Activated CD8-positive, alpha-beta T cell treated with anti-CD3 and anti-CD28 coated beads, Interleukin-2, amount 10 ng/mL, durations not matched to agents 7 days and 5 days (primary cell): ENCODE measurements at regions of chr1 and their contacts with region 1.

Region 1: DNA sequence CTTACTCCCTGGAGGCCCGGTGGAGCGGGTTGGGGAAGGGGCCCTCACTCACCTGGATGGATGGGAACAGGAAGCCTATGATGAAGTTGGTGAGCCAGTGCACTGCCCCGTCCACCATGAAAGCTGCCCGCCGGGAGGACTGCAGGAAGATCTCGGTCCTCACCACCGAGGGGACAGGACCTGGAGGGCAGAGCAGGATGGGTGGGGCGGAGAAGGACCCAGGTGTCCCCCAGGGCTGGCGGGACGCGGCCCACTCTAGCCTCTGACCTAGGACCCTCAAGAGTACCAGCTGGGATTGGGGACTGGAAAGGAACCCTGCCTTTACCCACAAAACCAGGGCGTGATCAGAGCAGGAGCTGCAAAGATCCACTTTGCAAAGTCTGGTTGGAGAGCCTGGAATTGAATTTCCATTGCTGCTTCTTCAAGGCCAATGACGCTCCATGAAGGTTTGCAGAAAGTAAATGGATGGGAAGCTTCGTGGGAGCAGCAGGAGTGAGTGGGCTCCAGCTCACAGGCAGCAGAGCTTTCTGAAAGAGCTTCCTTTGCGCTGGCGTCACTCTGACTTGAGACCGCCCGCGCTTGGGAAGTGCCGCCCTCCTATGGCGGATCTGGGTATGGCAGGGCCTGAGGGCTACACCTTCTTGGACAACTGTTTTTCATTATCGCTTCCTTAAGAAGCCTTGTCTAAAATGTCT is 21.4 kb downstream of the SLC2A7 start:
- DNase-seq: peak; percentile 92
- ATAC-seq: peak; percentile 87
- H3K4me3 Mint-ChIP-seq: peak overlapping the region; percentile 70
- H3K27ac Mint-ChIP-seq: peak overlapping the region; percentile 73
- H3K4me1 Mint-ChIP-seq: peaks cover 22% of the 10 kb centered on the region
- H3K27me3 Mint-ChIP-seq: peaks cover 9% of the 10 kb centered on the region

Region 2: DNA sequence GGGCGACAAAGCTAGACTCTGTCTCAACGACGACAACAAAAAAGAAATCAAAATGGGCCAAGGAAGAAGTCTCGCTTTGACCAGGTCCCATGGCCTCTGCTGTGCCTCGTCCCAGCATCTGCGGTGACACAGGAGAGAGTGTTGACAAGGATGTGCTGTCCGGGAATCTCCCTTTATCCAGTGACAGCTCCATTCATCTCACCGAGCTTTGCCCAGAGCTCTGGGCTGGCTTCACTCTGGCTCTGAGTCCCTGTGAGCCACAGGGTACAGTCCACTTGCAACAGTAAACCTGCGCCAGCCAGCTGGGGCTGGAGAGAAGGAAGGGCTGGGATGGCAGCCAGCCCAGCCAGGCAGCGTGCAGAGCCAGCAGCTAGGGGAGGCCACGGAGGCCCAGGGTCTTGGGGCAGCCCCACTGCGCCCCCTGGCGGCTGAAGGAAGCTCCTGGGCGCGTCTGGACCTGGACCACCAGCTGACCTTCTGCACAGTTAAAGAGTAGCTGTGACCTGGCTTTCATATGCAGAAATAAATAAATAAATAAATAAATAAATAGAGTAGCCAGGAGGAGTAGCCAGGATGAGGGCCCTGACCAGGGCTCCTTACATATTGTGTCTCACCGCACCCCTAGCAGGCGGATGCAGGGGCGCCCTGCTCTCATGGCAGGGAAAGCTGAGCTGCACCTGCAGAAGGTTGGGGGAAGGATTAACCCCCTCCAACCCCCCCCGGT is 156.0 kb before region 1 on chr1:
- CTCF ChIA-PET with region 1: interaction called, 33 read pairs
- POLR2A ChIA-PET with region 1: no interaction called
- DNase-seq: peak; percentile 80
- ATAC-seq: peak; percentile 96
- H3K4me3 Mint-ChIP-seq: no peak overlapping the region
- H3K27ac Mint-ChIP-seq: no peak overlapping the region
- H3K4me1 Mint-ChIP-seq: peaks cover 12% of the 10 kb centered on the region
- H3K27me3 Mint-ChIP-seq: peaks cover 2% of the 10 kb centered on the region

Region 3: DNA sequence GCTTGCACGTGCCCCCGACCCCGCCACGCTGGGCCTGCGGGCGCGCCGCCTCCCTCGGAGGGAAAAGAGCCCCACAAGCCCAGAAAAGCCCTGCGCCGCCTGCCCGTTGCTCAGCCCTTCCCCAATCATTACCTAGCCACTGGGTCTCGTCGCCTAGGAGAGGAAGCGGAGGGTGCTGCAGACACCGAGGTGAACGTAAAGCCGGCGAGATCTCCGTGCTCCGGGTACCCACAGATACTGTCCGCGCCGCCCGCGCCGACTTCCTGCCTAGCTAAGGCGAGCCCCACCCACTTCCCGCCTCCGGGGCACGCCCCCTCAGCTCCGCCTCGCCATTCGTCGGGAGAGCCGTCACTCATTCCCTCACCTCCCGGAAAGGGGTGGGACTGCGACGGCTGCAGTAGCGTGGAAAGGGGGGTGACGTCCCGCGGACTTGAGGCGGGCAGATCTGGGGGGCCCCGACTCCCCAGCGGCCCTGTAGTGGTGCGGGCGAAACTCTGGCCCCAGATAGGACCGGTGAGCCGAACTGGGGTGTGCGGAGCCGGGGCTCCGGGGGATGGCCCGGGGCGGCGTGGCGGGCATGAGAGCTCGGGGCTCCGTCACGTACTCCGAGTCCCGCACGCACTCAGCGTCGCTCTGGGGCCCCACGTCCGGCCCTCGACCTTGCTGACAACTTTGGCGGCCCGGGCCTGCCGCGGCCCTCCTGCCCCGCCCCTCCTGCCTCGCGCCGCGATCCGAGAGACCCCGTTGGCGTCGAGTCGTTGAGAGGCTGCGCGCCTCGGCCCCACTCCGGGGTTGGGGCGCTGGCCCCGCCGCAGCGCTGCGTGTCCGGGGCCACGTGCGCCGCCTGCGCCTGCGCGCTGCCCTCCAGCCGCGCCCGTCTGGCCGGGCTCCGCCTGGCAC is 126.1 kb before region 1 on chr1 and contains the start of gene ENO1:
- CTCF ChIA-PET with region 1: interaction called, 41 read pairs
- POLR2A ChIA-PET with region 1: interaction called, 8 read pairs
- DNase-seq: peak; percentile 99
- ATAC-seq: peak; percentile 76
- H3K4me3 Mint-ChIP-seq: peak within 1 kb of the TSS; percentile 97
- H3K27ac Mint-ChIP-seq: peak within 1 kb of the TSS; percentile 96
- H3K4me1 Mint-ChIP-seq: peaks cover 37% of the 10 kb centered on the region
- H3K27me3 Mint-ChIP-seq: no peaks in the 10 kb centered on the region
- total RNA-seq, gene ENO1: 3,150 to 3,216 TPM

Region 4: GRCh38 chr1:8910914-8911313 is 93.9 kb before region 1 on chr1:
- CTCF ChIA-PET with region 1: interaction called, 288 read pairs
- POLR2A ChIA-PET with region 1: interaction called, 7 read pairs
- DNase-seq: no peak
- ATAC-seq: no peak
- H3K4me3 Mint-ChIP-seq: no peak overlapping the region
- H3K27ac Mint-ChIP-seq: peak overlapping the region; percentile 74
- H3K4me1 Mint-ChIP-seq: peaks cover 54% of the 10 kb centered on the region
- H3K27me3 Mint-ChIP-seq: no peaks in the 10 kb centered on the region

Region 5: GRCh38 chr1:8962812-8963530 is 41.9 kb before region 1 on chr1:
- CTCF ChIA-PET with region 1: interaction called, 58 read pairs
- POLR2A ChIA-PET with region 1: no interaction called
- DNase-seq: peak; percentile 80
- ATAC-seq: peak; percentile 42
- H3K4me3 Mint-ChIP-seq: peak overlapping the region; percentile 99
- H3K27ac Mint-ChIP-seq: peak overlapping the region; percentile 85
- H3K4me1 Mint-ChIP-seq: peaks cover 83% of the 10 kb centered on the region
- H3K27me3 Mint-ChIP-seq: no peaks in the 10 kb centered on the region

Region 6: DNA sequence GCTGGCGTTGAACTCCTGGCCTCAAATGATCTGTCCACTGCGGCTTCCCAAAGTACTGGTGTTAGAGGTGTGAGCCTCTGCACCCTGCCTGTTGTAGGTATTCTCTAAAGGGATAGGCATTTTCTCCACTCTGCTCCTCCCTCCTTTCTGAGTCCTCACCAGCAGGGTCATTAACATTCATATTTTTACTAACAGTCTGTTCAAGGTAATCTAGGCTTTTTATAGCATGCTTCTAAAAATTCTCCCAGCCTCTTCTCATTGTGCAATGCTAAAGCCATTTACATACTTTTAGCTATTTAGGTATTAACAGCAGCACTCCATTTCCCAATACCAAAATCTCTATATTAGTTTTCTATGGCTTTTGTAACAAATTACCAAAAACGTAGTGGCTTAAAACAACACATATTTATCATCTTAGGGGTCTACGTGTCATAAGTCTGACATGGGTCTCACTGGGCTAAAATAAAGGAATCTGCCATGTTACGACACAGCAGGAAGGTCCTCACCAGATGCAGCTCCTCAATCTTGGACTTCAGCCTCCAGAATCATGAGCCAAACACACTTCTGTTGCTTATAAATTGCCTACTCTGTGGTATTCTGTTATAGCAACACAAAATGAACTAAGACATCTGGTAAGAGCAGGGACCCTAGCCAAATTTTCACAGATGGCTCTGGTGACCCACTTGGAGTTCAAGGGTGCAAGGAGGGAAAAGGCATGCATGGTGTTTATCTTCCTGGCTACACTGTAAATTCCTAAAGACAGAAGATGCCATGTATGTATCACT is 24.3 kb after region 1 on chr1:
- CTCF ChIA-PET with region 1: no interaction called
- POLR2A ChIA-PET with region 1: no interaction called
- DNase-seq: no peak
- ATAC-seq: no peak
- H3K4me3 Mint-ChIP-seq: no peak overlapping the region
- H3K27ac Mint-ChIP-seq: no peak overlapping the region
- H3K4me1 Mint-ChIP-seq: no peaks in the 10 kb centered on the region
- H3K27me3 Mint-ChIP-seq: peaks cover 5% of the 10 kb centered on the region

Region 7: GRCh38 chr1:9101510-9102146 is 96.8 kb after region 1 on chr1:
- CTCF ChIA-PET with region 1: interaction called, 34 read pairs
- POLR2A ChIA-PET with region 1: no interaction called
- DNase-seq: peak; percentile 59
- ATAC-seq: peak; percentile 79
- H3K4me3 Mint-ChIP-seq: no peak overlapping the region
- H3K27ac Mint-ChIP-seq: no peak overlapping the region
- H3K4me1 Mint-ChIP-seq: no peaks in the 10 kb centered on the region
- H3K27me3 Mint-ChIP-seq: peaks cover 2% of the 10 kb centered on the region